ENCODE measurements at regions of chr9 and their contacts with region 1.

Region 1: DNA sequence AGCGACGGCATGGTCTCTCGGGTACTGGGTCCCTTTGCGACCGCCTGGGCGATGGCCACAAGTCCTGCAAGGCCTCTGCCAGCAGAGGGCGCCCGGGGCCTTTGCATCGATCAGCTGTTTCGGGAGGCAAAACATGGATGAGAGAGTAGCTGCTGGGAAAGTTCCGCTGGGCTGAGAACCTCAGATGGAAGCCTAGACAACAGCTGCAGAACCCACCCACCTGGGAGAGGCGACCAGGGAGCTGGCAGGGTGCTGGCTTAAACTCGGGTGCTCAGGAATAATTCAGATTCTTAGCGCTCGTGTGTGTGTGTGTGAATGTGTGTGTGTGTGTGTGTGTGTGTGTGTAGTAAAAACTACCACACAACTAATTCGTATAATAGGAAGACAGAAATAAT is 50.0 kb downstream of the TRIM32 start:
- DNase-seq: peak; percentile 83
- H3K4me3 ChIP-seq: no peak overlapping the region; a peak in 1 of 4 replicates
- H3K27ac ChIP-seq: no peak overlapping the region
- H3K4me1 ChIP-seq: no peaks in the 10 kb centered on the region; a peak in 1 of 4 replicates
- H3K27me3 ChIP-seq: no peaks in the 10 kb centered on the region
- CTCF ChIP-seq: peak; percentile 91
- EP300 ChIP-seq: no peak
- RAD21 ChIP-seq: peak; percentile 92

Region 2: GRCh38 chr9:116616304-116616914 is 120.7 kb before region 1 on chr9:
- CTCF ChIA-PET with region 1: no interaction called
- POLR2A ChIA-PET with region 1: no interaction called
- DNase-seq: no peak
- H3K4me3 ChIP-seq: no peak overlapping the region
- H3K27ac ChIP-seq: no peak overlapping the region
- H3K4me1 ChIP-seq: no peaks in the 10 kb centered on the region
- H3K27me3 ChIP-seq: no peaks in the 10 kb centered on the region
- CTCF ChIP-seq: no peak
- EP300 ChIP-seq: no peak
- RAD21 ChIP-seq: no peak

Region 3: DNA sequence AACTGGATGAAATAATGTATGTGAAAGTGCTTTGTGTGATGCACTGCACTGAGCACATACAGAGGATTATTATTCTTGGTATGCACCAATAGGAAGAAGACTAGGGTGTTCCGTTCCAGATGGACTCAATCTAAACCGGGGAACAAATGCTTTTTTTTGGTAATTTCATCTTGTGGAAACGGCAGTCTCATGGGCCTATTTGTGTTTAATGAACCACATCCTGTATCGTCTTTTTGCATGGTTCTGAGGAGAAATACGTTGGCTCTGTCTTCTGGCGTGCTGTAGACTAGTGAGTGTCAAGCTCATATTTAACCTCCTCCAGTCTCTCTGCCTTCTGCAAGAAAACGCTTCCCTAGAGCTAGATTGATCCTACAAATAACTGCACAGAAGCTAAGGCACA is 20.0 kb before region 1 on chr9:
- CTCF ChIA-PET with region 1: interaction called, 70 read pairs
- POLR2A ChIA-PET with region 1: no interaction called
- DNase-seq: no peak
- H3K4me3 ChIP-seq: no peak overlapping the region
- H3K27ac ChIP-seq: no peak overlapping the region
- H3K4me1 ChIP-seq: peaks cover 0 to 9% of the 10 kb centered on the region in 2 experiments; a peak in 1 of 4 replicates
- H3K27me3 ChIP-seq: no peaks in the 10 kb centered on the region
- CTCF ChIP-seq: no peak
- EP300 ChIP-seq: no peak
- RAD21 ChIP-seq: no peak

Region 4: DNA sequence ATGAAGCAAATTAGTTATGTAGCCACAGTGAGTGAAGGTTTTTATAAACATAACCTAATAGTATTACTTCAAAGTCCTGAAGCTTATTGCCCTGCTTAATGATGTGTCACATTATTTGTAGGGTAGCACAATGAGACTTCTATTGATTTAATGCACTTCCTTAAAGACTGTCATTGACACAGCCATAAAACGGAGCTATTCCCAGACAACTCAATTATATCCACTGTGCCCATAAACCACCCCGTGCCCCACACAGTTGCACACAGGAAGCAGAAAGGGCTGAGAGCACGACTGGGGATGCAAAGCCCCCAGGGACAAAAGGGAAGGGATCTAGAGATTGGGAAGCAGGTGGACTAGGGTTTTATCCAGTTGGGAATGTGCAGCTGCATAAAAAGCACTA is 13.0 kb before region 1 on chr9:
- CTCF ChIA-PET with region 1: interaction called, 70 read pairs
- POLR2A ChIA-PET with region 1: no interaction called
- DNase-seq: no peak
- H3K4me3 ChIP-seq: no peak overlapping the region
- H3K27ac ChIP-seq: no peak overlapping the region
- H3K4me1 ChIP-seq: no peaks in the 10 kb centered on the region
- H3K27me3 ChIP-seq: no peaks in the 10 kb centered on the region
- CTCF ChIP-seq: no peak
- EP300 ChIP-seq: no peak
- RAD21 ChIP-seq: no peak

Region 5: GRCh38 chr9:116749176-116749575 is 12.0 kb after region 1 on chr9:
- CTCF ChIA-PET with region 1: interaction called, 24 read pairs
- POLR2A ChIA-PET with region 1: no interaction called
- DNase-seq: no peak
- H3K4me3 ChIP-seq: no peak overlapping the region
- H3K27ac ChIP-seq: no peak overlapping the region
- H3K4me1 ChIP-seq: peaks cover 0 to 4% of the 10 kb centered on the region in 2 experiments; a peak in 1 of 4 replicates
- H3K27me3 ChIP-seq: no peaks in the 10 kb centered on the region
- CTCF ChIP-seq: no peak
- EP300 ChIP-seq: no peak
- RAD21 ChIP-seq: no peak

Region 6: DNA sequence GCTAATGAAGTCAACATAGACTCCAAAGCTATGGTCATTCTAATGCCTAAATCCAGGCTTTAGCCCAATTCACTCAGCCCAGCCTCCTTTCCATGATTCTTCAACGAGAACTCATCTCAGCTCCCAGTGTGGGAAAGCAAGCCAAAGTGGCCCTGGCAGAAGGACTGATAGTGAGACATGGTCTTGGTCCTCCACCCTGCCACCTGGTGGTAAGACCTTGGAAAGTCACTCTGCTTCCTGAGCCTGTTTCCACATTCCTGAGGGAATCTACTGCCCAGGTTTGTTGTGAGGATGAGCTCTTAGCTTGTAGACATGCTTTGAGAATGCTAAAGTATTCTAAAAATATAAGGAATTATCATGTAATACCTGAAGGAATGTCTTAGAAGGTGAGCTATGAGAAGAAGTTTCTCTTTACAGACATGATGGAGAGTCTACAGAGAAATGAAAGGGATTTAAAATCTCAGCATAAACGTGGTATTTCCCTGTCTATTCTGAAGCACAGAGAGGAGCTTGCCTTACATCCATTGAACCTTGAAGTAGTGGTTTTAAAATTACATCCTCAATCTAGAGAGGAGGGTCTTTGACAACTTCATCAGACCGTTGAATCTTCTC is 123.5 kb after region 1 on chr9:
- CTCF ChIA-PET with region 1: interaction called, 88 read pairs
- POLR2A ChIA-PET with region 1: no interaction called
- DNase-seq: peak; percentile 64
- H3K4me3 ChIP-seq: no peak overlapping the region
- H3K27ac ChIP-seq: no peak overlapping the region
- H3K4me1 ChIP-seq: no peaks in the 10 kb centered on the region
- H3K27me3 ChIP-seq: no peaks in the 10 kb centered on the region
- CTCF ChIP-seq: peak; percentile 71
- EP300 ChIP-seq: no peak
- RAD21 ChIP-seq: peak; percentile 66